ENCODE measurements at regions of chr6 and their contacts with region 1.

Region 1: GRCh38 chr6:46719099-46719498 is 16.1 kb downstream of the PLA2G7 start:
- DNase-seq: peak; percentile 63
- H3K4me3 Mint-ChIP-seq: no peak overlapping the region
- H3K27ac Mint-ChIP-seq: no peak overlapping the region
- H3K4me1 Mint-ChIP-seq: peaks cover 44% of the 10 kb centered on the region
- H3K27me3 Mint-ChIP-seq: no peaks in the 10 kb centered on the region
- CTCF ChIP-seq: no peak

Region 2: GRCh38 chr6:46832816-46833215 is 113.7 kb after region 1 on chr6:
- CTCF ChIA-PET with region 1: no interaction called
- intact Hi-C with region 1: loop called (anchors 5 kb)
- DNase-seq: no peak
- H3K4me3 Mint-ChIP-seq: no peak overlapping the region
- H3K27ac Mint-ChIP-seq: no peak overlapping the region
- H3K4me1 Mint-ChIP-seq: no peaks in the 10 kb centered on the region
- H3K27me3 Mint-ChIP-seq: no peaks in the 10 kb centered on the region
- CTCF ChIP-seq: no peak

Measured in Calu3 (cell line).